ENCODE measurements at regions of chr17 and their contacts with region 1.

Region 1: DNA sequence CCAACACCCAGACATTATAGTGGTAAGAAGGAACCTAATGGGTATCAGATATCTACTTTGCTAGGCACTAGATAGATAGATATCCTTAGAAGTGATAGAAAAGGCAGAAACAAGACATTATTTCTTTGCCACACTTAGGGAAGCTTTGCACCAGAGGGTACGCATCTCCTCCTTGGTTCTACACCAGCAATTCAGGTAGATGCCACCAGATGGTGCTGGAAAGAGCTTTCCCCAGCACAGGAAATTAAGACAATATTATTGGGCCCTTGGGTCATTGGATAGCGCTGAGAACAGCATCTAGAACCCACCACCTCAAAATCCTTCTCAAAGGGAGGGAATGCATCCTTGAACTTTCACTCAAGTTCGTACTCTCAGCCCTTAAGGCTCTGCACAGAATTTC is 173.8 kb upstream of the CCL2 start:
- DNase-seq: no peak
- ATAC-seq: no peak; the same call in 2 of the 3 replicates
- H3K4me3 ChIP-seq: no peak overlapping the region
- H3K27ac ChIP-seq: no peak overlapping the region
- H3K4me1 ChIP-seq: no peaks in the 10 kb centered on the region
- H3K27me3 ChIP-seq: no peaks in the 10 kb centered on the region; a peak in 1 of 5 replicates
- CTCF ChIP-seq: peak; percentile 43
- EP300 ChIP-seq: no peak
- POLR2A ChIP-seq: no peak
- RAD21 ChIP-seq: no peak

Region 2: DNA sequence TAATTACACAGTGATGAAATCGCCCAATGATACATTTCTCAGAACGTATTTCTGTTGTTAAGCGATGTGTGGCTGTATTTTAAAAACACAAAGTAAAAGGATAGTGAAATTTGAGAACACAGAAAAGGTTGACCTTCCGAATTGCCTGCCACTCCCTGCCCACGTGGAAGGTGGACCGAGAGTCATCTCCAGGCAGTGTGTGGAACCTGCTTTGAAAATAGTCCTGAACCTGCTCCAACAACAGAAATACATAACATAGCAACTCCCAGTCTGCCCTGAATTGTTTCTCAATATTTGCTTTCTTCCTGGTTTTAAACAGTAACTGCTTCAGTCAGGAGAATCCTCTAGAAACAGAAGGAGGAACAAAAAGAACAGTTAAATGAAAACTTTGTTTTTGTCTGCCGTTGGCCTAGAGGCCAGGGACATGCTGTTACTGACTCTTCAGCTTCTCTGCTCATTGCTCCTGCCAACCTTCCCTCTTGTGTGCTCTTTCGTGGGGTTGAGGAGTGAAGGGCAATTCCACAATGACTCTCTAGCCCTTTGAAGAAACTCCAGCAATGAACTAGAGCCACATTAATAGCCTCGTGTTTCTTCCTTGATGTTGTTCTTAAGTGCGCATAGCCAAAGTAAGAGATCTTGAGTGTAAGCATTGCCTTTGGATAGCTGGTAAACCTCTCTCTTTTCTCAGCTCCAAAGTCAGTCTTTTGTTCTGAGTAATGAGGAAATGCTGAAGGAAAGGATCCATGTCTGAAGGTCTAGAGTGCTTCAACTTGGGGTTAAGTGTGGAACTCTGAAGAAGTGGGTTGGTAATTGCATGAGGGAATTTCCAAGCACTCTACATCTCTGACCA is 278.7 kb before region 1 on chr17:
- CTCF ChIA-PET with region 1: no interaction called
- POLR2A ChIA-PET with region 1: no interaction called
- in situ Hi-C with region 1: no loop called
- intact Hi-C with region 1: no loop called
- DNase-seq: no peak
- ATAC-seq: no peak
- H3K4me3 ChIP-seq: no peak overlapping the region
- H3K27ac ChIP-seq: no peak overlapping the region
- H3K4me1 ChIP-seq: no peaks in the 10 kb centered on the region
- H3K27me3 ChIP-seq: no peaks in the 10 kb centered on the region
- CTCF ChIP-seq: no peak
- EP300 ChIP-seq: no peak
- POLR2A ChIP-seq: no peak
- RAD21 ChIP-seq: no peak

Region 3: GRCh38 chr17:33871720-33872540 is 209.3 kb before region 1 on chr17:
- CTCF ChIA-PET with region 1: no interaction called
- POLR2A ChIA-PET with region 1: no interaction called
- in situ Hi-C with region 1: no loop called
- intact Hi-C with region 1: no loop called
- DNase-seq: no peak
- ATAC-seq: no peak
- H3K4me3 ChIP-seq: no peak overlapping the region
- H3K27ac ChIP-seq: no peak overlapping the region
- H3K4me1 ChIP-seq: no peaks in the 10 kb centered on the region
- H3K27me3 ChIP-seq: no peaks in the 10 kb centered on the region; a peak in 1 of 5 replicates
- CTCF ChIP-seq: no peak
- EP300 ChIP-seq: no peak
- POLR2A ChIP-seq: no peak
- RAD21 ChIP-seq: no peak

Region 4: DNA sequence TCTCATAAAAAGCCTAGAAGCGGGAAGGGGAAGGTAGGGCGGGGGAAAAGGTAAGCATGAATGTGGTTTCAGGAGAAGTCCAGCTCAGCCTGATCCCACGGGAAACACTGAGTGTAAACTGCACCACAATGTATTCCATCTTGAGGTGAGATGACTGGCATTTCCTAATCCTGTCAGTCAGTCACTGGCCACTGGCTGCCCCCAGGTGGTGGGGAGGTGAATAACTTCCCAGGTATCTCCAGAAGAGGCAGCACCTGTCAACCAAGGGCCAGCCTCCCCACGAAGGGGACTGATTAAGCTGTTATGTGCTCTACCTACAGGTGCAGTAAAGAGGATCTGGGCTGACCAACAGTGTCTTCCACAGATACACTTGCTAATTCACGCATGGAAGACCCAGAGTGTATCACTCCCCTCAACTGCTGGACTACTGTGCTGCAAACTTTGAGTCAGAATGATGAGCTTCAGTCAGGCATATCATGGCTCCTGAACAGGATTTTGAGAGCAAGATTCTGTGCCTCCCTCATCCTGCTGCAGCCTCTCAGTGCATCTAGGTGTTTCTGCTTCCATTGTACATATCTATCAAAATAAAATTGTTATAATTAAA is 65.3 kb after region 1 on chr17:
- CTCF ChIA-PET with region 1: interaction called, 11 read pairs
- POLR2A ChIA-PET with region 1: no interaction called
- in situ Hi-C with region 1: no loop called
- intact Hi-C with region 1: no loop called
- DNase-seq: peak; percentile 43
- ATAC-seq: peak; percentile 89
- H3K4me3 ChIP-seq: no peak overlapping the region
- H3K27ac ChIP-seq: no peak overlapping the region
- H3K4me1 ChIP-seq: no peaks in the 10 kb centered on the region
- H3K27me3 ChIP-seq: no peaks in the 10 kb centered on the region
- CTCF ChIP-seq: peak; percentile 83
- EP300 ChIP-seq: no peak
- POLR2A ChIP-seq: no peak
- RAD21 ChIP-seq: peak; percentile 48